ENCODE measurements at regions of chr10 and their contacts with region 1.

Region 1: GRCh38 chr10:31864834-31865518 is 63.7 kb downstream of the ARHGAP12 start:
- DNase-seq: no peak
- H3K4me3 ChIP-seq: peak overlapping the region in 1 of 4 donors; percentile 3
- H3K27ac ChIP-seq: peak overlapping the region; percentile 12 to 56 (median 35)
- H3K4me1 ChIP-seq: peaks cover 0 to 38% (median 23%) of the 10 kb centered on the region in 4 donors
- H3K27me3 ChIP-seq: no peaks in the 10 kb centered on the region
- CTCF ChIP-seq: no peak
- EP300 ChIP-seq: no peak
- POLR2A ChIP-seq: no peak

Region 2: DNA sequence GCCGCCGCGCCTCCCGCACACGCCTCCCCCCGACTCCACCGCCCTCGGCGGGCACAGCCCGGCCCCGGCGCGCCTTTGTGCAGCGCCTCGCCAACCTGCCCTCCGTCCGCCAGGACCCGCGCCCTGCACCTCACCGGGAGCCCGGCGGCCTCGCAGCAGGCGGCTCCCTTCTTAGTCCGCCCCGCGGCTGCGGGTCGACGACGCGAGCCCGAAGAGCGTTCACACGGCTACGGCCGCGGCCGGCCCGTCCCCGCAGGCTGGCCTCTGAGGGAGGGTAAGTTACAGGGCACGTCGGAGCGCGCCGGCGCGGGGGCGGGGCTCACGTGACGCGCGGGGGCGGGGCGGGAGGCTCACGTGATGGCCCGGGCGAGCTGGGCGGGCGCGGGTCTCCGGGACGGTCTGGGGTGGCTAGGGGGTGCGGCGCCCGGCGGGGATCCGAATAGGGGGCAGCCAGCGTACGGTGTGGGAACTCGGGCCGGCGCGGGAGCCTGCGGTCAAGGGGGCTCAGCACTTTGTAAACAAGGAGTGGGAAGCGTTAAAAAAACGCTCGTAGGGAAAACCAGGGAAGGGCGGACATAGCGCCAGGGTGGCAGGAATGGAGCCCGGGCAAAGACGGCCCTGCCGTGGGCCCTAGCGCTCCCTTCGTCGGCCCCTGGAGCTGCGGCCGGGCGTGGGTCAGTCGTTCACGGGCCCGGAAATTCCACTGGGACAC is 63.7 kb after region 1 on chr10 and contains the start of gene ARHGAP12:
- intact Hi-C with region 1: loop called (anchors 5 kb)
- DNase-seq: peak; percentile 95
- H3K4me3 ChIP-seq: peak within 1 kb of the TSS; percentile 77 to 92 (median 82)
- H3K27ac ChIP-seq: peak within 1 kb of the TSS; percentile 95 to 99 (median 96)
- H3K4me1 ChIP-seq: peaks cover 0 to 45% (median 36%) of the 10 kb centered on the region in 4 donors
- H3K27me3 ChIP-seq: no peaks in the 10 kb centered on the region
- CTCF ChIP-seq: no peak
- EP300 ChIP-seq: no peak
- POLR2A ChIP-seq: peak; percentile 76 to 83
- total RNA-seq, gene ARHGAP12: 44.9 to 90.5 (median 63.1) TPM

Region 3: GRCh38 chr10:31947144-31947926 is 82.4 kb after region 1 on chr10:
- intact Hi-C with region 1: loop called (anchors 2 kb)
- DNase-seq: peak; percentile 71
- H3K4me3 ChIP-seq: peak overlapping the region in 3 of 4 donors; percentile 6 to 12 (median 9)
- H3K27ac ChIP-seq: peak overlapping the region; percentile 56 to 69 (median 63)
- H3K4me1 ChIP-seq: peaks cover 0 to 36% (median 27%) of the 10 kb centered on the region in 4 donors
- H3K27me3 ChIP-seq: no peaks in the 10 kb centered on the region
- CTCF ChIP-seq: peak in 3 of 4 experiments; percentile 10 to 65 (median 52)
- EP300 ChIP-seq: no peak
- POLR2A ChIP-seq: no peak

Region 4: GRCh38 chr10:32210306-32211045 is 345.5 kb after region 1 on chr10:
- intact Hi-C with region 1: loop called (anchors 5 kb)
- DNase-seq: no peak
- H3K4me3 ChIP-seq: no peak overlapping the region
- H3K27ac ChIP-seq: no peak overlapping the region
- H3K4me1 ChIP-seq: no peaks in the 10 kb centered on the region
- H3K27me3 ChIP-seq: no peaks in the 10 kb centered on the region
- CTCF ChIP-seq: peak in 2 of 4 experiments; percentile 29 to 31
- EP300 ChIP-seq: no peak
- POLR2A ChIP-seq: no peak